GM13976 (cell line): ENCODE measurements at regions of chr5 and their contacts with region 1.

Region 1: GRCh38 chr5:122515709-122516431 is 203.8 kb downstream of the SNCAIP start:
- DNase-seq: peak; percentile 65
- CTCF ChIP-seq: peak; percentile 50

Region 2: DNA sequence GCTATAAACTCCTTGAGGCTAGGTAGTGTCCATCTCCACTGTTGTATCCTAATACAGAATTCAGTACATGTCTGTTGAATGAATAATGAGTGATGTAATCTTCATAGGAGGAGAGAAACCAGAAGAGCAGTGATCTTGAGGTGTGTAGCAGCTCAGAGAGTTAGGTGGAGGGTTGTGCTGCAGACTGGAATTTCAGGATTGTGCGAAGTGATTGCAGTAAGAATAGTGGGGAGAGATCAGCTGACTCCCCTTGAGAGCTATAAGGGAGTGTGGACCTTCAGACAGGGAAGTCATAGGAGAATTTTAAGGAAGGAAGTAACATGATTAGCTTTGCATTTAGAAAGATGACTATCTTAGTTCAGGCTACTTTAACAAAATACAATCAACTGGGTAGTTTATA is 333.9 kb after region 1 on chr5:
- in situ Hi-C with region 1: no loop called
- DNase-seq: no peak
- CTCF ChIP-seq: no peak

Region 3: DNA sequence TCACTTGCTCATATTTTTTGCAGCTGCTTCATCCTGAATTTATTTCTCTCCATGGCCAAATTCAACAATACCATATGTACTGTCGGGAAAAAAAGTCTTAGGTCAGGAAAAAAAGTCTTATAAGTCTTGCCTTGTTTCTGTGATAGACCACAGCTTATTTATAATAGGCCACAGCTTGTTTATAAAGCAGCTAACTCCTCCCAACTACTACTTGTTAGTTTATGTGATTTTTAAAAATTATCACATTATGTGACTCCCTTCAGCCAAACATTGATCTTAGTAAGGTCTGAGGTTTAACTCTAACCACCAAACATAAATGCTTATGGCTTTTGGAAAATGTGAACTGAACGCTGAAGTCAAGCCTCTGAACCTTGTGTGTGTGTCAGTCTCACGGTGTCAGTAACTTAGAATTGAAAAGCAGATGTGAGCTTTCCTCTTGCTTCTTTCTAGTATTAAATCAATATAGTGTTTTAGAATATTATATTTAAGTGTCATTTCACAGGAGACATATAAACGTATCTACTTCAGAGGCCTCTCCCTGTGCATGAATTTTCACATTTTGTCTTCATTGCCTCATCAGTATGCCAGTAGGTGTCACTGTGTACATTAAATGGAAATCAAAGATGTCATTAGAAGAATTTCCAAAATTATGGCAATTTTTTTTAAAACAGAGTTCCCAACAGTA is 380.9 kb after region 1 on chr5:
- in situ Hi-C with region 1: loop called (anchors 25 kb)
- DNase-seq: no peak
- CTCF ChIP-seq: no peak

Region 4: GRCh38 chr5:123007182-123007581 is 491.3 kb after region 1 on chr5:
- in situ Hi-C with region 1: no loop called
- DNase-seq: no peak
- CTCF ChIP-seq: no peak

Region 5: GRCh38 chr5:123344816-123345426 is 829.1 kb after region 1 on chr5:
- in situ Hi-C with region 1: loop called (anchors 25 kb)
- DNase-seq: no peak
- CTCF ChIP-seq: peak; percentile 28

Region 6: DNA sequence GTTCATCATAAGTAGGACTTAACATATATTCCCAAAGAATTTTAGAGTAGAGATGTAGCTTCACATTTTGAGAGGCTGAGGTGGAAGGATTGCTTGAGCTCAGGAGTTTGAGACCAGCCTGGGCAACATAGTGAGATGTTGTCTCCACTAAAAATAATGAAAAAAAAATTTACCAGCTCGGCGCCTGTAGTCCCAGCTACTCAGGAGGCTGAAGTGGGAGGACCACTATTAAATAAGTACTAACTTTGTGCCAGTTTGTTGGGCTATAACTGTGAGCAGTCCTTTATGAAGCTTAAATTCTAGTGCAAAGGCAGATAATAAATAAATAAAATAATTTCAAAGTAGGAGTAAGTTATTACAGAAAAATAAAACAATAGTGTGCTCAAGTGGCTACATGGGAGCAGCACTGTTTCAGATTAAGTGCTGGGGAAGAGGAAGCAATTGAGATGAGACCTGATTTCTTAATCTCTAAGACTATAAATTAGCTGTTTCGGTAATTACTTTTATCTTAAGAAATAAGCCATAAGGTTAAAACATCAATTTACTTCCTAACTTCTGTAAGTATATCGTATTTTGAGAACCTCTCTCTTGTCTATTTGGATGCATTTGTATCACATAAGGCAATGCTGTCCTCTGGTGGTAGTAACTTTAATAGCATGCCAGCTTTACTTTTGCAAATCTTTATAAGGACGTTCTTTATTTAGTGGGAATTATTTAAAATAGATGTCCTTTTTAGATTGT is 1095.0 kb after region 1 on chr5:
- in situ Hi-C with region 1: loop called (anchors 25 kb)
- DNase-seq: peak; percentile 25
- CTCF ChIP-seq: peak; percentile 77